Naive thymus-derived CD8-positive, alpha-beta T cell (primary cell): ENCODE measurements at regions of chr19 and their contacts with region 1.

Region 1: DNA sequence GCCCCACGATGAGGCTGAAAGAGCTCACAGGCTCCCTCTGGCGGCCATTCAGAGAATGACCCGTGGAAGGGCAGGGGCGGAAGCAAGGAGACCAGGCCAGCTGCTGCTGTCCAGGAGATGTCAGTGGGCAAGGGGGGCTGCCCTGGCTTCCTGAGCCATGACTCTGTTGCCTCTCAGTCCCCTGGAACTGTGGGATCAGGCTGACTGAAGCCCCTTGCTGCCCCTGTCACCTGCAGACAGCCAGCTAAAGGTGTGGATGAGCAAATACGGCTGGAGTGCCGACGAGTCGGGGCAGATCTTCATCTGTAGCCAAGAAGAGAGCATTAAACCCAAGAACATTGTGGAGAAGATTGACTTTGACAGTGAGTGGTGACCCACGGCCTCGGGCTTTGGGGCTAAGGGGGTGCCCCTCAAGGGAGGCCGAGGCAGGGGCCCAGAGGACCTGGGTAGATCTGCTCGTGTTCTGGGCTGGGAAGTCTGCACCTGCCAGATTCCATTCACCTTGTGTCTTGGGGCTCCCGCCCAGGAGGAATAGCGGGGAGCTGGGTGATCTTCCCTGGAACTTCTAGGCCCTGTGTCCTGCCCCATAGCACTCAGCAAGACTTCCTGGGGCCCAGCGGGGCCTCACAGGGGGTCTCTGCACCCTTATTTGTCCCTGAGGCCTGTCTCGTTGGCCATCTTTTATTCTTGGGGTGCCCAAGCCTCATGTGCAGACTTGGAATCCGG is 12.5 kb upstream of the ACTN4 start:
- DNase-seq: peak; percentile 42 to 83 (median 69)
- ATAC-seq: peak; percentile 27 to 34
- H3K4me3 Mint-ChIP-seq: peak overlapping the region in 7 of 10 donors; percentile 2 to 64 (median 50)
- H3K27ac Mint-ChIP-seq: peak overlapping the region in 7 of 10 donors; percentile 3 to 88 (median 64)
- H3K4me1 Mint-ChIP-seq: peaks cover 11 to 35% (median 30%) of the 10 kb centered on the region in 4 donors
- H3K27me3 Mint-ChIP-seq: no peaks in the 10 kb centered on the region

Region 2: GRCh38 chr19:38514812-38515633 is 119.9 kb before region 1 on chr19:
- POLR2A ChIA-PET with region 1: interaction called, 11 read pairs
- DNase-seq: peak; percentile 51 to 83 (median 74)
- ATAC-seq: peak; percentile 93 to 96
- H3K4me3 Mint-ChIP-seq: no peak overlapping the region
- H3K27ac Mint-ChIP-seq: peak overlapping the region in 5 of 10 donors; percentile 5 to 70 (median 43)
- H3K4me1 Mint-ChIP-seq: peaks cover 6 to 7% (median 7%) of the 10 kb centered on the region in 4 donors
- H3K27me3 Mint-ChIP-seq: peaks cover 0 to 13% (median 4%) of the 10 kb centered on the region in 5 donors

Region 3: GRCh38 chr19:38653028-38653571 is 18.2 kb after region 1 on chr19:
- POLR2A ChIA-PET with region 1: no interaction called
- DNase-seq: no peak
- ATAC-seq: no peak
- H3K4me3 Mint-ChIP-seq: no peak overlapping the region
- H3K27ac Mint-ChIP-seq: peak overlapping the region in 2 of 10 donors; percentile 19 to 59
- H3K4me1 Mint-ChIP-seq: peaks cover 27 to 97% (median 59%) of the 10 kb centered on the region in 4 donors
- H3K27me3 Mint-ChIP-seq: peaks cover 18 to 84% (median 52%) of the 10 kb centered on the region in 5 donors